Activated T-helper 2 cell treated with anti-CD3 and anti-CD28 coated beads, Interferon-gamma antibody, Interleukin-2, Interleukin-4, amounts not matched to agents 10 μg/mL and 5 μg/mL and 100 μg/mL, durations not matched to agents 14 hours and 24 hours and 36 hours (primary cell): ENCODE measurements at regions of chr15 and their contacts with region 1.

Region 1: DNA sequence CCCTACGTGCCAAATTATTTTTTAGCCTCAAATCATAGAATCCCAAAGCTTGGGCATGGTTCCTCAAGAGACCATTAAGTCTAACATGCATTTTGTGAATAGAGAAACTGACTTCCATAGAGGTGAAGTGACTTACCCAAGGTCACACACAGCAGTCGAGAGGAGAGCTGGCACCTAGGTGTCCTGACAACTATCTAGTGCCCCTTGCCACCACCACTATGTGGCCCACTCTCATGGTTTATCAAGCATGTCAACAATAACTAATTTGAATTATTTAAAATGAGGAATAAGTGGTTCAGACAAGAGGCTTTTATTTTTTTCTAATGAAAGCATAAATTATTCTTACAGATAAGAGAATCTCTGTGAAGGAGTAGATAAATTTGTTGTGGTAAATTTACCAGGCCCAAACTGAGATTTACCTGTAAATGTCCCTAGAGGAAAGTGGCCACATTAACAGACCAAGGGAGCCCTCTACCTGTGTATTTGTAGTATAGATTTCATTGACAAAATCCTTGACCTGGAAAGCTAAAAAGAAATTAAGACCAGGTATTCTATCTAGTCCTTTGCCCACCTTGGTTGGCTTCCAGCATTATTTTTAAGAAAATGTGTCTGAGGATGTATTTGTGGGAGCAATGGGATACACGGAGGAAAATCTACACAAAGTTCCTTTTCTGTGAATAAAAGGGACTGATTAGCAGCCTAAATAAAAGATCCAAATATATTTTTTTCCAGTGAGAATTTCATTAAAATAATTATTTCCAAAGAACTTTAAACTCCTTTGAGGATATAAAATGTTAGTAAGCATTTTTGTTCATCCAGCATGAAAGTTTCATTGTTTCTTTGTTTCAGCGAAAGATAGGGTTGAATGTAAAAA is 49.1 kb downstream of the IQCH start:
- DNase-seq: no peak
- H3K4me3 Mint-ChIP-seq: no peak overlapping the region
- H3K27ac Mint-ChIP-seq: no peak overlapping the region
- H3K4me1 Mint-ChIP-seq: peaks cover 8% of the 10 kb centered on the region
- H3K27me3 Mint-ChIP-seq: peaks cover 32% of the 10 kb centered on the region

Region 2: DNA sequence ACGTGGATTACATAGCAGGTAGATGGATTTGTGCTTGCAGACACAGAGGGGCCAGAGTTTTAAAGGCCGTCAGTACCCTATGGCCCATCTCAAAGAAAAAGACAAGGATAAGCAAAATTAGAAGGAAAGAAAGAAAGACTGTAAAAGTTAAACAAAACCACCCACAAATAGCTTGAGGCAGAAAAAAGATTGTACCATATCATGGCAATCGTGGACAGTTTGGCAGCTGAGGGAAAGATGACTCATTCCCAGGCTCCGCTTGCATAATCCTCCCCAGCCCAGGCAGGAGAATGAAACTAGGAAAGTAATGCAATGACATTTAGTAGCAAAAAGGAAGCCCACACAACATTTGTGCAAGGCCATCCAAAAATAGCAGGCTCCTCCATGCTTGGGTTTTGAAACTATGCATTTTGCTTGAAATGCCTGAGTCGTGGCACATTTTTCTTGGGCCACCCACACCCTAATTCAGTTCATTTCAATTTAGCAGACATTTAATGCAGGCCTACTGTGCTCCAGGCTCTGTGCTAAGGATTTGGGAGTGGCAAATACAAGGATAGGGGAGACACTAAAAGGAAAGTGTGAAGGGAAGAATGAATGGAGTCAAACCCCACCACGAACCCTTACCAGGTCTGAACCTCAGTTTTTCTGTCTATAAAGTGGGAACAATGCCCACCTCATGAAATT is 279.3 kb before region 1 on chr15:
- intact Hi-C with region 1: loop called (anchors 5 kb)
- DNase-seq: no peak
- H3K4me3 Mint-ChIP-seq: peak overlapping the region; percentile 6
- H3K27ac Mint-ChIP-seq: no peak overlapping the region
- H3K4me1 Mint-ChIP-seq: peaks cover 38% of the 10 kb centered on the region
- H3K27me3 Mint-ChIP-seq: peaks cover 18% of the 10 kb centered on the region

Region 3: GRCh38 chr15:67322481-67322880 is 18.8 kb after region 1 on chr15:
- intact Hi-C with region 1: no loop called
- DNase-seq: no peak
- H3K4me3 Mint-ChIP-seq: no peak overlapping the region
- H3K27ac Mint-ChIP-seq: no peak overlapping the region
- H3K4me1 Mint-ChIP-seq: no peaks in the 10 kb centered on the region
- H3K27me3 Mint-ChIP-seq: peaks cover 32% of the 10 kb centered on the region

Region 4: DNA sequence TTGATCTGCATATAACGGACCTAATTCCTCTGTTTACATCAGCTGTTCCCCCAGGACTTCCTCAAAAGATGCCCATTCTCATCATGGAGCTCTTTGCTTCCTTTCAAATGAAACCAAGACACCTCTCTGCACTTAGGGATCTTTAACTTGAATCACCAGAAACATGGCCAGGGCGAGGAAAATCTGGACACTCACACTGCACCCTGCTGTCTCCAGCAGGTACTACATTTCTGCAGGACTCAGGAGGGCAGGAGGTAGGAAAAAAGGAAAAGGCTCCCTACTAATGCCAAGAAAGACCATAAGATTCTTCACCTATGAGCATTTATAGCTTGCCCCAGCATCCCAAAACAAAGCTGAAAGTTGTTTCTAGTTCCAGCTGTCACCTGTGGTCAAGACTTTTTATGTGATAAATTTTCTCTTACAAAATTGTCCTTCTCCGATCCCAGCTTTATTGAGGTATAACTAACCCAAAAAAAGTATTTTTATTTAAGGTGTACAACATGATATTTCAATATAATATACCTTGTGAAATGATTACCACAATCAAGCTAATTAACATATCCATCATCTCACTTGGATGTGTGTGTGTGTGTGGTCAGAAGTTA is 129.9 kb after region 1 on chr15:
- intact Hi-C with region 1: loop called (anchors 10 kb)
- DNase-seq: no peak
- H3K4me3 Mint-ChIP-seq: no peak overlapping the region
- H3K27ac Mint-ChIP-seq: no peak overlapping the region
- H3K4me1 Mint-ChIP-seq: no peaks in the 10 kb centered on the region
- H3K27me3 Mint-ChIP-seq: peaks cover 4% of the 10 kb centered on the region